ENCODE measurements at regions of chr9 and their contacts with region 1.

Region 1: DNA sequence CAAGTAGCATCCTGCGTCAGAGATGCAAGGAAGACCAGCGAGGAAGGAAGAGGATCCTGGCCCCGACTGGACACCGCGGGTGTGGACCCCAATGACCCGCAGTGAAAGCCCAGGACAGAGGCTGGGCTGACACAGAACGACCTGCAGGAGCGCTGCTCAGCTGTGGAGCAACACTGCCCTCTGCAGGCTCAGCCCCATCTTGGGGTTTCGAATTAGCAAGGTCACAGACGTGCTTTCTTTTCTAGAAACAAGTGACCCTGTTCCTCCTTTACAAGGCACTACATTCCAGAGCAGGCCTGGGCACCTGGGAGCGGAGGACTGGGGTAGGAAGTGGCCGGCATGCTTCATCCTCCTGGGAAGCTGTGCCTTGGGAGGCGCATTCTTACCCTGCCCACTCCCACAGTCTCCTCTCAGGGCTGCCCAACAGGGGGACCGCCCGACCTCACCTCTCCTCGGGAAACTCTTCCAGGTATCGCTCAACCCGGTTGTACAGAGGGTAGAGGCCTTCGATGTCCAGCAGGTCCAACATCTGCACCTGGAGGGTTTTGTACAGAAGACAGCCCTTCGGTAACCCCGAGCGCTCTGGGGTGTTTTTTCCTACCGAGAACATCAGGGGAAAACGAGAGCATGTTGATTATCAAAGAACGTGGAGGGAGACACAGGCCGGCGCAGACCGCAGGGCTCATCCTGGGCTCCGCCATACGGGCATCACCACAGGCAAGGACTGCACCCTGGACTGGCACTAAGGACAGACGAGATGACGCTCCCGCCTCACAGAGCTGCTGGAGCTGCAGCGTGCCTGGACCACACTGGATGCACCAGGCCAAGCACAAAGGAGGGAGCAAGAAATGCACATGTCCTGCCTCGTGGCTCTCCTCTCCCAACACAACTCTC is 35.0 kb downstream of the IPPK start:
- DNase-seq: peak; percentile 81 to 85
- H3K4me3 ChIP-seq: no peak overlapping the region
- H3K27ac ChIP-seq: peak overlapping the region; percentile 37
- H3K4me1 ChIP-seq: no peaks in the 10 kb centered on the region
- H3K27me3 ChIP-seq: no peaks in the 10 kb centered on the region
- CTCF ChIP-seq: peak; percentile 63 to 94 (median 87)
- POLR2A ChIP-seq: no peak

Region 2: DNA sequence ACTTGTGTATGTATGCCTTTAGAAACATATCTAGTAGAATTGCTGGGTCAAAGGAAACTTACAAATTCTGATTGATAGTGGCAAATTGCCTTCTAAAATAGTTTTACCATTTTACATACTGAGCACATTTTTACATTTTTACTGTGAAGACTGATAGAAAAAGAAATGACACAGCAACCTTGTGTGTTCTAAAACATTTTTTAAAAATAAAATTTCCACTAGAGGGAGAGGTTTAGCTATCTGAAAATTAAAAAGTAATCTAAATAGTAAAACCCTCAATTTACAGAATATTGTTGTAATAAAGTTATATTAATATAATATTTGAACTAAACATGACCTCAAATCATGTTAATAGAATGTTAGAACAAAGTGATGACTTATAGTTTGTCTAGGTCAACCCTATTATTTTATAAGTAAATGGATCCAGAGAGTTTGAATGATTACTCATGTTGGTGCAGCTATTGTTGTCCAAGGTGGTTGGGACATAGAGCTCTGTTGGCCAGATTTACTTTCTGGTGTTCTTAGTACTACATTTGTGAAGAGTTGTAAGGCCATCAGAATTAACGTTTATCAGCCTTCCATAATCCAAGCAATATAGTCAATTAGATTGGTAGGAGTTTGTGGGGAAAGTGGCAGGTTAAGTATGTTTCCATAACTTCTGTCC is 292.0 kb before region 1 on chr9:
- intact Hi-C with region 1: loop called (anchors 5 kb)
- DNase-seq: no peak
- H3K4me3 ChIP-seq: no peak overlapping the region
- H3K27ac ChIP-seq: peak overlapping the region; percentile 63
- H3K4me1 ChIP-seq: no peaks in the 10 kb centered on the region
- H3K27me3 ChIP-seq: no peaks in the 10 kb centered on the region
- CTCF ChIP-seq: peak in 2 of 3 experiments; percentile 40 to 47
- POLR2A ChIP-seq: no peak

Region 3: DNA sequence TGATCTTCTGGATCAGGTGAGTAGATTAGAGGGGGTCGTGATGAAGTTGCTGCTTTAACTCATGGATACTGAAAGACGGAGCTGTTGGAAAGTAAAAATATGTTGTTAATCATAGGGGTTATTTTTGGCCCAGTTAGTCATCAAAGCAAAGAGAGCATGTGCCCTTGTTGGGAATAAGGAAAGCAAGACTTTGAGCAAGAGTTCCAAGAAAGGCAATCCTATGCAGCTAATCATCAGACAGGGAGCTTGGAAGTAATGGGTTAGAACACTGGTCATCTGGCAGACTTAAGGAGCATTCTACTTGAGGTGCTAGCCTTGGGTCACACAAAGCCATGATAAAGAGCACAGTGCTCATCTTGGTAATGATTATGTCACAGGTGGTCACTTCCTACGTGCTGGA is 171.0 kb before region 1 on chr9:
- intact Hi-C with region 1: no loop called
- DNase-seq: no peak
- H3K4me3 ChIP-seq: no peak overlapping the region
- H3K27ac ChIP-seq: peak overlapping the region; percentile 69
- H3K4me1 ChIP-seq: peaks cover 8% of the 10 kb centered on the region
- H3K27me3 ChIP-seq: no peaks in the 10 kb centered on the region
- CTCF ChIP-seq: no peak
- POLR2A ChIP-seq: no peak

Region 4: DNA sequence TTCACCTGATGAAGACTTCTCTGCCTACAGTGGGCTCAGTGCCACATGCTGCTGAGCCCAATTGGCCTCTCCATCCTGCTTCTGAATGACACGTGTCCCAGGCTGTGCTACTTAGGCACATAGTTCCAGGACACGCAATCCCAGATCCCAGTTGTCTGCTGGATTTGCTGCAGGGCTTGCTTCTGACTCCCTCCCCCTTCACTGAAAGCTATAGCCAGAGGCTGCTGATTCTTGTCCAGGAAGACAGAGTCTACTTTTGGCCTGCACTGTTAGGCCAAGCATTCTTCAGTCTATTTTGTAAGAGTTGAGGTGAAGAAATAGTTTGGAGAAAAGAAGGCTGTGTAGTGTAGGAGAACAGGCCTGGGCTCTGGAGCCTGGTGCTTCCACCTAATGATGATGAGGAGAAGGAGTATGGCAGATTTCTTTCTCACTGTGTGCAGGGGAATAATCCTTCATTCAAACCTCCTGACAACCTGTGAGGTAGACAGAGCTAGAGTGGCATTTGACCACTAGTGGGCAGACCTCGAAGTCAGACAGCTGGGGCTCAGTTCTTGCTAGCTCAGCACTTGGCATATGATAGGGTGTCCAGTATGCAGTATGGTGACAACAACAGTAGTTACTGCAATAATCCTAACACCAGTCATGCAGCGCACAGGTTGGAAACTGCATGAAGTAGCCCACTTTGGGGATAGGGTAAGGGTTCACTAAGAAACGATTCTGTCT is 133.1 kb before region 1 on chr9:
- intact Hi-C with region 1: loop called (anchors 10 kb)
- DNase-seq: no peak
- H3K4me3 ChIP-seq: no peak overlapping the region
- H3K27ac ChIP-seq: peak overlapping the region; percentile 55
- H3K4me1 ChIP-seq: peaks cover 46% of the 10 kb centered on the region
- H3K27me3 ChIP-seq: no peaks in the 10 kb centered on the region
- CTCF ChIP-seq: no peak
- POLR2A ChIP-seq: no peak

Region 5: GRCh38 chr9:92686954-92687353 is 52.0 kb after region 1 on chr9:
- intact Hi-C with region 1: no loop called
- DNase-seq: no peak
- H3K4me3 ChIP-seq: no peak overlapping the region
- H3K27ac ChIP-seq: no peak overlapping the region
- H3K4me1 ChIP-seq: peaks cover 2% of the 10 kb centered on the region
- H3K27me3 ChIP-seq: no peaks in the 10 kb centered on the region
- CTCF ChIP-seq: no peak
- POLR2A ChIP-seq: no peak